Activated CD4-positive, alpha-beta T cell treated with anti-CD3 and anti-CD28 coated beads, Interleukin-2, amount 10 ng/mL, durations not matched to agents 24 days and 14 days (primary cell): ENCODE measurements at regions of chr20 and their contacts with region 1.

Region 1: GRCh38 chr20:56392282-56393137 is at the start of gene CSTF1:
- DNase-seq: peak; percentile 100
- H3K4me3 Mint-ChIP-seq: no peak within 1 kb of the TSS
- H3K27ac Mint-ChIP-seq: no peak within 1 kb of the TSS
- H3K4me1 Mint-ChIP-seq: peaks cover 44% of the 10 kb centered on the region
- H3K27me3 Mint-ChIP-seq: no peaks in the 10 kb centered on the region
- total RNA-seq, gene CSTF1: 52.2 and 52.5 TPM in 2 replicates

Region 2: DNA sequence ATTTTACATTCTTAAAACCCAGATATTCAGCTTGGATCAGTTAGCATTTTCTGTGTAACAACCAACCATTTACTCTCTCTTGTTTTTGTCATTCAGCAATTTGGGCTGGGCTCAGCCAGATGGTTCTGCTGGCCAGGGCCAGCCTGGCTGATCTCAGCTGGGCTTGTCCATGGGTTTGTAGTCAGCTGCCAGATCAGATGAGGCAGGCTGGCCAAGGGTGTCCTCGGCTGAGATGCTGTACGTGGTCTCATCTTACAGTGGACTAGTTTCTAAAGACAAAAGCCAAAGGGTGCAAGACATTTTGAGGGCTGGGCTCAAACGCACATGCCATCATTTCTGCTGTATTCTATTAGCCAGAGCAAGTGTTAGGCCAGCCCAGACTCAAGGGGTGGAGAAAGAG is 49.7 kb before region 1 on chr20:
- intact Hi-C with region 1: no loop called
- DNase-seq: peak; percentile 38
- H3K4me3 Mint-ChIP-seq: no peak overlapping the region
- H3K27ac Mint-ChIP-seq: no peak overlapping the region
- H3K4me1 Mint-ChIP-seq: peaks cover 2% of the 10 kb centered on the region
- H3K27me3 Mint-ChIP-seq: peaks cover 68% of the 10 kb centered on the region

Region 3: GRCh38 chr20:56373940-56374339 is 18.6 kb before region 1 on chr20:
- intact Hi-C with region 1: loop called (anchors 2 kb)
- DNase-seq: no peak
- H3K4me3 Mint-ChIP-seq: no peak overlapping the region
- H3K27ac Mint-ChIP-seq: peak overlapping the region; percentile 45
- H3K4me1 Mint-ChIP-seq: peaks cover 40% of the 10 kb centered on the region
- H3K27me3 Mint-ChIP-seq: no peaks in the 10 kb centered on the region

Region 4: GRCh38 chr20:56468316-56469082 is 76.0 kb after region 1 on chr20 and contains the start of gene RTF2:
- intact Hi-C with region 1: loop called (anchors 1 kb)
- DNase-seq: peak; percentile 100
- H3K4me3 Mint-ChIP-seq: peak within 1 kb of the TSS; percentile 98
- H3K27ac Mint-ChIP-seq: peak within 1 kb of the TSS; percentile 99
- H3K4me1 Mint-ChIP-seq: peaks cover 37% of the 10 kb centered on the region
- H3K27me3 Mint-ChIP-seq: peaks cover 2% of the 10 kb centered on the region
- total RNA-seq, gene RTF2: 92.3 and 96.5 TPM in 2 replicates

Region 5: DNA sequence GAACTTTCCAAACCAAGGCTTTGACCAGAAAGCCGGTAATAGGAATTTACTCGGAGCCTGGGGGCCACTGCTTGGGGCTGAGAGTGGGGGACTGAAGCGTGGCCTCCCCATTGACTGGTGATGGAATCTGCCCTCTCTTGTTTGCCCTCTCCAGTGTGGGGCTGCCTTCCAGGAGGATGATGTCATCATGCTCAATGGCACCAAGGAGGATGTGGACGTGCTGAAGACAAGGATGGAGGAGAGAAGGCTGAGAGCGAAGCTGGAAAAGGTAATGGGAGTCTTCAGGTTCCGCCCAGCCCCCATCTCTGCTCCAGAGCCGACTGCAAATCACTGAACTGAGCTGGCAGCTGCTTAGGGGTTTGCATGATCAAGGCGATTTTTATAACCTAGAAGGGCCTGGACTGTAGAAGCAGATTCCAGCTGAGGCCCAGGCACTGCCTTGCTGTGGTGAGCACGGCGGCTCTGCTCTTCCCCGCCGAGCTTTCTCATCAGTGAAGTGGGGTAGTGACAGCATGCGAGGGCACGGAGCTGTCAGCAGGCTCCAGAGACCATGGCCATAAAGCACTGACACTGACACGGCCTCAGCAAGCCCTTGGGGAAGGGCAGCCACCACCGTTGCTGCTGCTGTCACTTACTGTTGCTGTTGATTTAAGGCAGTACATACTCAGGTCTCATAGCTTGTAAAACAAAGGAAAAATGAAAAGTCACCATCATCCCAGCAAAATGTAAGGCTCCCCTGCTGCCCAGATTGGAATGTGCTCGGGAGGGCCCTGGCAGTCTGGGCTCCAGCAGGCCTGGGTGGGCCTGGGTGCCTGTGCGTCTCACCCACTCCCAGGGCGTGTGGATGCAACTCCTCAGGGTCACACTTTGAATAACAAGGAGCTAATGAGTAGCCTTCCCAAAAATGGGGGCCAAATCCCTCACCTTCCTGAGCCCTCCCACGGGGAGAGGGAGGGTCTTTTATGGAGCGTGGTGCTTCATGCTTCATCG is 120.9 kb after region 1 on chr20:
- intact Hi-C with region 1: no loop called
- DNase-seq: no peak
- H3K4me3 Mint-ChIP-seq: no peak overlapping the region
- H3K27ac Mint-ChIP-seq: no peak overlapping the region
- H3K4me1 Mint-ChIP-seq: peaks cover 2% of the 10 kb centered on the region
- H3K27me3 Mint-ChIP-seq: no peaks in the 10 kb centered on the region

Region 6: GRCh38 chr20:56676679-56677078 is 284.2 kb after region 1 on chr20:
- intact Hi-C with region 1: no loop called
- DNase-seq: no peak
- H3K4me3 Mint-ChIP-seq: no peak overlapping the region
- H3K27ac Mint-ChIP-seq: no peak overlapping the region
- H3K4me1 Mint-ChIP-seq: no peaks in the 10 kb centered on the region
- H3K27me3 Mint-ChIP-seq: no peaks in the 10 kb centered on the region

Region 7: GRCh38 chr20:56689288-56689687 is 296.8 kb after region 1 on chr20:
- intact Hi-C with region 1: no loop called
- DNase-seq: no peak
- H3K4me3 Mint-ChIP-seq: no peak overlapping the region
- H3K27ac Mint-ChIP-seq: no peak overlapping the region
- H3K4me1 Mint-ChIP-seq: no peaks in the 10 kb centered on the region
- H3K27me3 Mint-ChIP-seq: no peaks in the 10 kb centered on the region

Region 8: DNA sequence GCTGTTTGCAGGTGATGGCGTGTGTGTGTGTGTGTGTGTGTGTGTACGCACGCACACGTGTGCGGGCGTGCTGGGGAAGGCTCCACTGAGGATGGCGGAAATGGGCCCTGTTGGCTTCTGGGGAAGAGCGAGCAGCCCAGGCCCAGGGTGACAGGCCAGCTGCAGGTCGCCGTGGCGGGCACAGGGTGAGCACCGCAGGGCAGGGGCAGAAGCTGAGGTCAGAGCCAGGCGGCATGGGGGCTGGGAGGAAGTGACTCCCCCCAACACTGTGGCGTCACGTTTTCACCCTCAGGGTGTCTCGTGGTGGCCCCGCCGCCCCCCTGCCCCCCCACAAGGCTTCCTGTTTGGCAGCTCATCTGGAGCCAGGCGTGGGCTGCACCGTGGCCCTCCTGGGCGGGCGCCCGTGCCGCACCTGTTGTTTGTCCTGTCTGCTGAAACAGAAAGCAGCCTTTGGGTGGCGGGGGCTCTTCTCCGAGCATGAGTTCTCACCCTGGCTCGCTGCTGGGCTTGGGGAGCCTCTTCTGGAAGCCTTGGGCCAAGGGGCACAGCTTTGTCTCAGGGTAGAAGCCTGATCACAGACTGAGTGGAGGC is 1005.8 kb after region 1 on chr20:
- intact Hi-C with region 1: loop called (anchors 5 kb)
- DNase-seq: peak; percentile 92
- H3K4me3 Mint-ChIP-seq: peak overlapping the region; percentile 86
- H3K27ac Mint-ChIP-seq: peak overlapping the region; percentile 95
- H3K4me1 Mint-ChIP-seq: peaks cover 69% of the 10 kb centered on the region
- H3K27me3 Mint-ChIP-seq: no peaks in the 10 kb centered on the region